ENCODE measurements at regions of chr2 and their contacts with region 1.

Region 1: DNA sequence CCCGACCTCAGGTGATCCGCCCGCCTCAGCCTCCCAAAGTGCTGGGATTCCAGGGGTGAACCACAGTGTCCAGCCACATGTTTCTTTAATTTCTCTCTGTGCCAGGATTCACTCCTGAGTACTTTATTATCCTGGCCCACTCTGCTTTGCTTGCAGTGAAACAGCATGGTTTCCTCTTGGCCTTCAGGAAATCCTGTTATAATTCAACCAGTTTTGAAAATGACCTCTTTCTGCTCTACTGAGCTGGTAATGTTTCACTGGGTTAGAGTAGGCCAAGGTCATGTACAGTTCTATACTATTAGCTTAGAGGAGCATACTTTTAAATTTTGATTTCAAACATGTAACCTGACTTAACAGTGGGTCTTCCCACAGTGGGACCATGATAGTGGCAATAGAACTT is 90.6 kb upstream of the PELI1 start:
- DNase-seq: no peak

Region 2: GRCh38 chr2:64062829-64063228 is 172.0 kb before region 1 on chr2:
- intact Hi-C with region 1: loop called (anchors 10 kb)
- DNase-seq: no peak

Region 3: GRCh38 chr2:64288321-64289193 is 53.8 kb after region 1 on chr2:
- intact Hi-C with region 1: no loop called
- DNase-seq: no peak

Measured in cardiac septum (tissue), 1 donor.